Head of caudate nucleus (tissue), 42 donors: ENCODE measurements at regions of chr2 and their contacts with region 1.

Region 1: GRCh38 chr2:127086990-127087790 is 19.8 kb downstream of the BIN1 start:
- DNase-seq: peak in 21 of 42 donors; percentile 48 to 85 (median 64)

Region 2: DNA sequence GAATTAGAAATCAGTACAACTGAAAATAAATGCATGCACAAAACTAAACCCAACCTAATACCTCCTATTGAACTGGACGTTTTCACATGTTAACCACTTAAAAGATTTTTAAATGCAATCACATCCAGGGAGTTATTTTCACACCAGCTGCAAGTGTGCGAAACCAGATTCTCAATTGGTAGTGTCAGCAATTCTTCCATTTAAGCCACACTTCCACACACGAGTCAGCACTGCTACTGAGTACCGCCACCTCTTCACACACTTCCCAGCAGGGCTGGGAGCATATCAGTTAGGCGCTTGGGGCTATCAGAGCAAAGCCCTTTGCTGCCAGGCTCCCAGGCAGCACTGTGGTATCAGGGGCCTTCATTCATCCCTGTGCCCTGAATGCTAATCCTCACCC is 192.6 kb after region 1 on chr2:
- intact Hi-C with region 1: loop called (anchors 10 kb)
- DNase-seq: no peak